Head of caudate nucleus (tissue), 42 donors: ENCODE measurements at regions of chr9 and their contacts with region 1.

Region 1: GRCh38 chr9:23728736-23729135 is 97.3 kb downstream of the ELAVL2 start:
- DNase-seq: no peak

Region 2: GRCh38 chr9:23784962-23785361 is 56.2 kb after region 1 on chr9:
- intact Hi-C with region 1: loop called (anchors 10 kb)
- DNase-seq: no peak